Panc1 (cell line): ENCODE measurements at regions of chr5 and their contacts with region 1.

Region 1: DNA sequence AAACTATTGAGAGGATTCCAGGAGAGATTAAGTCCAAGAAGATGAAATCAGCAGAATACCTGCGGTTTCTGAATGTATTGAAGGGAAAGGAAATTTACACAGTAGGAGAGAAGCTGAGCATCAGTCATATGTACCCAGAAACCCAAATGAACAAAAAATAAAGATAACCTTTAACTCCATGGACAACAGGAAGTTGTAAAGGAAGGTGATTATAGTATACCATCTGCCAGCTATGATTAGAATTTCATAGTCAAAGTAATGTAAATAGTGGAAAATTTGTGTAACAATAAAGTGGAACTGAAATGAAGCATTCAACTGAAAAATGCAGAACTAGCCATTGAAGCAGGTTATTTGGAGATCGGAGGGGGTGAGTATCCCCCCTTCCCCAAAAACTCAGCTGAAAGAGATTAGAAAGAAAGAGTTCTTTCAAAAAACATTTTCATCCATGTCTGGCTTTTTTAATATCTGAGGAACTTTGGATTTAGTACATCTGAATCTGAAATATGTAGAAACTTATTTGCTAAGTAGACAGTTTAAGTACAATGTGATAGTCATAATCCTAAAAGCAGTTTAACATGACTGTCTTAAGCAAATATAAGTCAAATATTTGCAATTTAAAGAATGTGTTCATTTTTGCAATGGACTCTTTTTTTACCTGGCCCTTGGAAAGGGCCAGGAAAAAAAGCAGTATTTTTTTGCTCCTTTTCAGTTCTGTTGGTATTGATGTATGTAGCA is 58.4 kb downstream of the APC start:
- DNase-seq: no peak
- ATAC-seq: no peak
- H3K4me3 ChIP-seq: no peak overlapping the region
- H3K27ac ChIP-seq: no peak overlapping the region
- H3K4me1 ChIP-seq: no peaks in the 10 kb centered on the region; the same call in 1 of the 2 replicates
- H3K27me3 ChIP-seq: no peaks in the 10 kb centered on the region
- CTCF ChIP-seq: no peak

Region 2: GRCh38 chr5:112633604-112634003 is 162.5 kb before region 1 on chr5:
- CTCF ChIA-PET with region 1: no interaction called
- POLR2A ChIA-PET with region 1: interaction called, 15 read pairs
- in situ Hi-C with region 1: no loop called
- intact Hi-C with region 1: no loop called
- DNase-seq: no peak
- ATAC-seq: no peak
- H3K4me3 ChIP-seq: no peak overlapping the region
- H3K27ac ChIP-seq: no peak overlapping the region
- H3K4me1 ChIP-seq: no peaks in the 10 kb centered on the region
- H3K27me3 ChIP-seq: peaks cover 2% of the 10 kb centered on the region; the same call in 1 of the 2 replicates
- CTCF ChIP-seq: no peak